Colonic mucosa (tissue), 4 donors: ENCODE measurements at regions of chr17 and their contacts with region 1.

Region 1: GRCh38 chr17:63406689-63407330 is 39.3 kb downstream of the CYB561 start:
- DNase-seq: peak; percentile 84
- H3K4me3 ChIP-seq: no peak overlapping the region
- H3K27ac ChIP-seq: no peak overlapping the region
- H3K4me1 ChIP-seq: no peaks in the 10 kb centered on the region
- H3K27me3 ChIP-seq: no peaks in the 10 kb centered on the region
- CTCF ChIP-seq: peak; percentile 82

Region 2: GRCh38 chr17:62671583-62672312 is 735.1 kb before region 1 on chr17:
- intact Hi-C with region 1: loop called (anchors 10 kb)
- DNase-seq: peak; percentile 42
- H3K4me3 ChIP-seq: no peak overlapping the region
- H3K27ac ChIP-seq: no peak overlapping the region
- H3K4me1 ChIP-seq: peaks cover 3% of the 10 kb centered on the region
- H3K27me3 ChIP-seq: no peaks in the 10 kb centered on the region
- CTCF ChIP-seq: no peak

Region 3: GRCh38 chr17:62703775-62704378 is 702.9 kb before region 1 on chr17:
- intact Hi-C with region 1: loop called (anchors 5 kb)
- DNase-seq: peak; percentile 67
- H3K4me3 ChIP-seq: peak overlapping the region; percentile 68
- H3K27ac ChIP-seq: no peak overlapping the region
- H3K4me1 ChIP-seq: peaks cover 4% of the 10 kb centered on the region
- H3K27me3 ChIP-seq: no peaks in the 10 kb centered on the region
- CTCF ChIP-seq: peak; percentile 75

Region 4: DNA sequence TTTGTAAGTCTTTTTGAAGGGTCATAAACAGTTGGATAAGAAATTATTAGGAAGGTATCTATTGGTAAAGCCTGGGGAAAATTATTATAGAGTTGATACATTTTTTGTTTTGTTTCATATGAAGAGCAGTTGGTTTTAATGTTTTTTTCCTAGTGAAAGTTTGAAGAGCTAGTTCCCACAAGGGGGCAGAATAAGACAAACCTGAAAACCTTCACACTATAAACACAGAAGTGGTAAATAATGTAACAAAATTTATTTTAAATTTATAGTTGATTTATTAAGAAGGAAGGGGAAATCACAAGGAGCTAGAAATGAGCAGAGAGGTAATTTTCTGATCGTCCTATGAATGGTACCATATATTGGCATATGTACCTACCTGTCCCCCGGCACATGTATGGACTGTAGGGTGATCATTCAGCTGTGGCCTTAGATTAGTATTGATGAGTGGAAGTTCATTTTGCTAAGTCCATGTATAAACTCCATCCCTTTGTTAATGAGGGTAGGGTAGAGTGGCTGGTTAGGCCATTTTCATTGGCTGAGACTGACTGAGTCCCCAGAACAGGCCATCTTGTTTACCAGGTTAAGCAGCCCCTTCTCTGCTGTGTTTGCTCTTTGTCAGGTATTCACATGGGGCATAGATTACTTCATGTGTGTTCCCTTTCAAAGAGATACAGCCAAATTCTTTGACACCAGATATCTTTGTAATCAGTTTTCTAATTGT is 324.4 kb before region 1 on chr17:
- intact Hi-C with region 1: loop called (anchors 2 kb)
- DNase-seq: no peak
- H3K4me3 ChIP-seq: no peak overlapping the region
- H3K27ac ChIP-seq: no peak overlapping the region
- H3K4me1 ChIP-seq: no peaks in the 10 kb centered on the region
- H3K27me3 ChIP-seq: no peaks in the 10 kb centered on the region
- CTCF ChIP-seq: peak; percentile 20

Region 5: GRCh38 chr17:63262751-63263476 is 143.9 kb before region 1 on chr17:
- intact Hi-C with region 1: no loop called
- DNase-seq: no peak
- H3K4me3 ChIP-seq: no peak overlapping the region
- H3K27ac ChIP-seq: no peak overlapping the region
- H3K4me1 ChIP-seq: no peaks in the 10 kb centered on the region
- H3K27me3 ChIP-seq: no peaks in the 10 kb centered on the region
- CTCF ChIP-seq: no peak